ENCODE measurements at regions of chr7 and their contacts with region 1.

Region 1: GRCh38 chr7:33448035-33448434 is 318.7 kb downstream of the BBS9 start:
- DNase-seq: no peak

Region 2: DNA sequence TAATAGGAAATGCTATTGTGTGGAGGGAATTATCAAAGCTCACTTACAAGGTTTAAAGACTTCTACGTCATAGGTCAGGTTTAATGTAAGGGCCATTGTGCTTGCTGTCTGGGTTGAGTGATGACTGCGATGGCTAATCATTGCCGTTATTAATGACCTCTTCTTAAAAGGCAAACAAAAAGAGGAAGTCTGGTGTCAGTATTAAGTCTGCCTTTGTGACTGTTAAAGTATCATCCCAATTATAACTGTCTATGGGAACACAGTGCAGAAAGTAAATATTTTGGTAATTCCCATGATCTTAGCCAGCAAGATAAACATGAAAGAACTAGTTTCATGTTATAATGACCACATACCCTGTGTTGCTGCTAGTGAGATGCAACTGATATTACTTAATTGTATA is 63.7 kb after region 1 on chr7:
- intact Hi-C with region 1: loop called in 1 of 2 experiments (anchors 2 kb)
- DNase-seq: no peak

Measured in posterior vena cava (tissue), 2 donors.